Activated B cell treated with CpG ODN at 0.5 μM for 24 hours (primary cell): ENCODE measurements at regions of chr1 and their contacts with region 1.

Region 1: DNA sequence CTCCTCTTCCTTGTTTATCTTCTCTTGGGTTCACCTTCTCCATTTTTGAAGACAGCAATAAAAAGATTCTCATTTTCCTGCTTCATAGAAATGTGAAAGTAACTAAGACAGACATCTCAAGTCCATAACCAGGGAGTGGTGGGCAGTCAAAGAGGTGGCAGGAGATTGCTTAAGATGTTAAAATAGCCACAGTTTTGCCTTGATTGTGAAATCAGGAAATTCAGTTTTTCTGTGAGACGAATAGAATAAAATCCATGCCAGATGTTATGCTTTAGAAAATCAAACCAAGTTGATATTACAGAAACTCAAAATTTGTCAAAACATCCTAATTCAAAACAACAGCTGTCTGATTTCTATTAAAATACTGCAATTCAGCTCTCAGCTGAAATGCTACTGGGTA is 57.2 kb downstream of the TNN start:
- DNase-seq: no peak
- ATAC-seq: no peak
- H3K4me3 Mint-ChIP-seq: no peak overlapping the region
- H3K27ac Mint-ChIP-seq: no peak overlapping the region
- H3K4me1 Mint-ChIP-seq: no peaks in the 10 kb centered on the region
- H3K27me3 Mint-ChIP-seq: peaks cover 3% of the 10 kb centered on the region
- CTCF ChIP-seq: no peak

Region 2: DNA sequence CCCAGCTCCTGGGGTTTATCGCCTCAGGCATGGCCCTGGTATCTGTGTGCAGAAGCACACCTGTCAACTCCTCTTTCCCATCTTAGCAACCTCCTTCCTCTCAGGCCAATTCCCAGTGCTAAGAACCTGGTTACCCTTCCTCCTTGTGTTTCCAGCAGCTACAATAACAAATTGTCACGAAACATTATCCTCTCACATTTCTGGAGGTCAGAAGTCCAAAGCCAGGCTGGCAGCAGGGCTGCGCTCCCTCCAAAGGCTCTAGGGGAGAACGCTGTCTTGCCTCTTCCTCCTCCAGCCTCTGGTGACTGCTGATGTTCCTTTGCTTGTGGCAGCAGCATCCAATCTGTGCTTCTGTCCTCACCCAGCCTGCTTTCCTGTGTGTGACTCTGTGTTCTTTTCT is 90.9 kb before region 1 on chr1:
- CTCF ChIA-PET with region 1: interaction called, 59 read pairs
- POLR2A ChIA-PET with region 1: interaction called, 17 read pairs
- intact Hi-C with region 1: loop called (anchors 1 kb)
- DNase-seq: no peak
- ATAC-seq: no peak
- H3K4me3 Mint-ChIP-seq: no peak overlapping the region
- H3K27ac Mint-ChIP-seq: no peak overlapping the region
- H3K4me1 Mint-ChIP-seq: peaks cover 9% of the 10 kb centered on the region
- H3K27me3 Mint-ChIP-seq: peaks cover 4% of the 10 kb centered on the region
- CTCF ChIP-seq: no peak